Activated B cell treated with CpG ODN at 0.5 μM for 24 hours (primary cell): ENCODE measurements at regions of chr6 and their contacts with region 1.

Region 1: GRCh38 chr6:36463676-36464075 is 20.9 kb downstream of the KCTD20 start:
- DNase-seq: no peak
- ATAC-seq: no peak
- H3K4me3 Mint-ChIP-seq: no peak overlapping the region
- H3K27ac Mint-ChIP-seq: no peak overlapping the region
- H3K4me1 Mint-ChIP-seq: peaks cover 17% of the 10 kb centered on the region
- H3K27me3 Mint-ChIP-seq: no peaks in the 10 kb centered on the region
- CTCF ChIP-seq: no peak

Region 2: GRCh38 chr6:36478051-36478526 is 14.4 kb after region 1 on chr6:
- CTCF ChIA-PET with region 1: no interaction called
- POLR2A ChIA-PET with region 1: interaction called, 10 read pairs
- intact Hi-C with region 1: no loop called
- DNase-seq: no peak
- ATAC-seq: no peak
- H3K4me3 Mint-ChIP-seq: no peak overlapping the region
- H3K27ac Mint-ChIP-seq: no peak overlapping the region
- H3K4me1 Mint-ChIP-seq: peaks cover 2% of the 10 kb centered on the region
- H3K27me3 Mint-ChIP-seq: no peaks in the 10 kb centered on the region
- CTCF ChIP-seq: no peak

Region 3: DNA sequence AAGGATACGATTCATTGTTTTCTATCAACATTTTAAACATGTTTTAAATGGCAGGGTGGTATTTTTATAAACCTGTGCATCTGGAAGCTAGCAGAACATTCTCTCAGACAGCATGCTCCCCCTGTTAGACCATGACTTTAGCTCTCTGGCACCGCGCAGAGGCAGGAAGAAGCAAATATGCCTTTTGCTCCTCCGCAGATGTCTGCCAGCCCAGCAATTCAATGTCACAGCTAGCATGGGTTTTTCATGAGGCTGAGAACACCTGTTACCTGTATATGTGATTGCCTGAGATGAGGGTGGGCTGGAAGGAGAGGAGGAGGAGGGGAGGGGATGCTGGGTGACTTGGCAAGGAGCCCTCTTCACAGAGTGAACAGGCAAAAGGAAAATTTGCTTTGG is 515.7 kb after region 1 on chr6:
- CTCF ChIA-PET with region 1: no interaction called
- POLR2A ChIA-PET with region 1: no interaction called
- intact Hi-C with region 1: no loop called
- DNase-seq: no peak
- ATAC-seq: peak; percentile 58
- H3K4me3 Mint-ChIP-seq: no peak overlapping the region
- H3K27ac Mint-ChIP-seq: no peak overlapping the region
- H3K4me1 Mint-ChIP-seq: peaks cover 30% of the 10 kb centered on the region
- H3K27me3 Mint-ChIP-seq: no peaks in the 10 kb centered on the region
- CTCF ChIP-seq: no peak